ENCODE measurements at regions of chr3 and their contacts with region 1.

Region 1: DNA sequence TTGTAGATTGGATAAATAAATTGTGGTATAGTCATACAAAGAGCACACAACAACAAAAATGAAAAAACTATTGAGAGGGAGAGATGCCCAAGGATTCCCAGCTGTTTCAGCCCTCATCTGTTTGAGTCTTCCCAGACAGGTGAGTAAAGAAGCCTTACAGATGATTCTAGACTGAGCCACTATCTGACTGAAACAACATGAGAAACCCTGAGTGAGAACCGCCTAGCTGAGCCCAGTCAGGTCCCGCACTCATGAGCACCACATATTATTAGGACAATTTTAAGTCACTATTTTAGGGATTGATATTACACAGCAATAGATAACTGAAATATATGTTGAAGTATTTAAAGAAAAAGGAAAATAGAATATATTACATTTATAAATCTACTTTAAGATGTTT is 19.0 kb downstream of the POPDC2 start:
- DNase-seq: no peak
- ATAC-seq: no peak
- H3K4me3 Mint-ChIP-seq: no peak overlapping the region
- H3K27ac Mint-ChIP-seq: no peak overlapping the region
- H3K4me1 Mint-ChIP-seq: peaks cover 0 to 16% (median 5%) of the 10 kb centered on the region in 4 donors
- H3K27me3 Mint-ChIP-seq: no peaks in the 10 kb centered on the region

Region 2: GRCh38 chr3:119628816-119629445 is 12.5 kb before region 1 on chr3:
- POLR2A ChIA-PET with region 1: no interaction called
- DNase-seq: no peak
- ATAC-seq: no peak
- H3K4me3 Mint-ChIP-seq: no peak overlapping the region
- H3K27ac Mint-ChIP-seq: no peak overlapping the region
- H3K4me1 Mint-ChIP-seq: peaks cover 4 to 26% (median 7%) of the 10 kb centered on the region in 4 donors
- H3K27me3 Mint-ChIP-seq: peaks cover 0 to 37% (median 7%) of the 10 kb centered on the region in 5 donors

Region 3: DNA sequence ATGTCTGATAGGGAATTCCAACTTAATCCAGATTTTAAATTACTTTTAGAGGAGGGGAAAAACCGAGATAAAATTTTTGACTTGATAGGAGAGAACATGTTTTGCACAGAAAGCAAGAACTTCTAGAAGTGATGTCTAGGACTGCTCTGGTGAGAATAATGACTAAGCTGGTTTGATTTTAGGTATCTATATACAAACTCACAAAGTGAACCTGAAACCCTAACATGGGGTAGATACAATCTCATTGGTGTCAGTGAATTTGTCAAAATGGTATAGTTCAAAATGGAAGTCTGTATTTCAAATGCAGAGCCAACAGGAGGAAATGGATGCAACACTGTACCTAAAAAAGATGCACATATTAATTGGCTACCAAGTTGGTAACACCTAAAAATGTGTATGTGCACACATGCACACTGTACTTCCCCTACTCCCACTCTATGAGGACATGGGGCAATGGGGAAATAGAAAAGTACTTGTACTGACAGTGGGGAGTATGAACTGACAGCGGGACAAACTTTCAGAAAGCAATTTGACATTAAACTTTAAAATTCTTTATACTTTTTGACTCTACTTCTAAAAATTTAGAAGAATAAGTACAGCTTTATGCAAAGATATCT is 193.4 kb after region 1 on chr3:
- POLR2A ChIA-PET with region 1: interaction called, 10 read pairs
- DNase-seq: no peak
- ATAC-seq: no peak
- H3K4me3 Mint-ChIP-seq: no peak overlapping the region
- H3K27ac Mint-ChIP-seq: no peak overlapping the region
- H3K4me1 Mint-ChIP-seq: peaks cover 2 to 13% (median 5%) of the 10 kb centered on the region in 4 donors
- H3K27me3 Mint-ChIP-seq: no peaks in the 10 kb centered on the region

Measured in naive thymus-derived CD8-positive, alpha-beta T cell (primary cell).